ENCODE measurements at regions of chr3 and their contacts with region 1.

Region 1: GRCh38 chr3:22089284-22089683 is 338.3 kb upstream of the ZNF385D start:
- DNase-seq: no peak
- H3K4me3 ChIP-seq: no peak overlapping the region
- CTCF ChIP-seq: peak; percentile 46

Region 2: DNA sequence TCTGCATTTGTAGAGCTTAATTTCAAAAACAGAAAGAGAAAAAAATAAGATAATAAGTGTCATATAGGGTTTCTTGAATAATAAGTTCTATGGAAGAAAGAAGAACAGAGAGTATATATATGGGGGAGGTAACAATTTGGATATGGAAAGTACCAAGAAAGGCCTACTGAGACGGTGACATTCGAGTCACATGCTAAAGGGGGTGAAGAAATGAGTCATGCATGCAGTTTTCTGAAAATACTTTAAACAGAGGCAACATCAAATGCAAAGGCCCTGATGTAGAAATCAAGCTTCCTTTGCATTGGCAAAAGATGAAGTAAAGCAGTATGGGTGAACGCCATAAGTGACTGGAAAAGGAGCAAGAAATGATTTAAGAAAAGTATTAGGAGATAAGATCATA is 33.3 kb after region 1 on chr3:
- in situ Hi-C with region 1: loop called (anchors 5 kb)
- DNase-seq: no peak
- H3K4me3 ChIP-seq: no peak overlapping the region
- CTCF ChIP-seq: no peak